Common myeloid progenitor, CD34-positive (primary cell): ENCODE measurements at regions of chr4 and their contacts with region 1.

Region 1: GRCh38 chr4:1356181-1356998 is 9.4 kb downstream of the UVSSA start:
- DNase-seq: peak; percentile 50 to 68 (median 55)
- H3K4me3 ChIP-seq: no peak overlapping the region
- H3K27ac ChIP-seq: no peak overlapping the region
- H3K4me1 ChIP-seq: peaks cover 0 to 3% (median 3%) of the 10 kb centered on the region in 4 experiments
- H3K27me3 ChIP-seq: no peaks in the 10 kb centered on the region

Region 2: GRCh38 chr4:1055721-1056590 is 300.4 kb before region 1 on chr4:
- CTCF ChIA-PET with region 1: no interaction called
- POLR2A ChIA-PET with region 1: no interaction called
- DNase-seq: peak; percentile 86 to 97 (median 96)
- H3K4me3 ChIP-seq: peak overlapping the region; percentile 10 to 70 (median 48)
- H3K27ac ChIP-seq: peak overlapping the region in 1 of 2 experiments; percentile 0
- H3K4me1 ChIP-seq: peaks cover 0 to 13% (median 12%) of the 10 kb centered on the region in 4 experiments
- H3K27me3 ChIP-seq: peaks cover 0 to 12% (median 3%) of the 10 kb centered on the region in 5 experiments

Region 3: GRCh38 chr4:1628892-1629698 is 272.7 kb after region 1 on chr4:
- CTCF ChIA-PET with region 1: interaction called, 19 read pairs
- POLR2A ChIA-PET with region 1: no interaction called
- DNase-seq: peak; percentile 21 to 56 (median 42)
- H3K4me3 ChIP-seq: no peak overlapping the region
- H3K27ac ChIP-seq: no peak overlapping the region
- H3K4me1 ChIP-seq: peaks cover 0 to 11% (median 4%) of the 10 kb centered on the region in 4 experiments
- H3K27me3 ChIP-seq: no peaks in the 10 kb centered on the region